CD4-positive, alpha-beta memory T cell (primary cell): ENCODE measurements at regions of chrX and their contacts with region 1.

Region 1: GRCh38 chrX:70433848-70434351 is 10.7 kb upstream of the DLG3 start:
- DNase-seq: peak; percentile 73 to 76 (median 76)
- H3K4me3 ChIP-seq: peak overlapping the region; percentile 69 to 82
- H3K4me3 Mint-ChIP-seq: peak overlapping the region; percentile 89 to 95 (median 92)
- H3K27ac ChIP-seq: peak overlapping the region; percentile 40
- H3K27ac Mint-ChIP-seq: peak overlapping the region; percentile 86 to 95 (median 94)
- H3K4me1 ChIP-seq: peaks cover 9% of the 10 kb centered on the region
- H3K4me1 Mint-ChIP-seq: peaks cover 2 to 27% (median 11%) of the 10 kb centered on the region in 4 donors
- H3K27me3 ChIP-seq: no peaks in the 10 kb centered on the region
- H3K27me3 Mint-ChIP-seq: peaks cover 0 to 2% of the 10 kb centered on the region in 2 donors

Region 2: DNA sequence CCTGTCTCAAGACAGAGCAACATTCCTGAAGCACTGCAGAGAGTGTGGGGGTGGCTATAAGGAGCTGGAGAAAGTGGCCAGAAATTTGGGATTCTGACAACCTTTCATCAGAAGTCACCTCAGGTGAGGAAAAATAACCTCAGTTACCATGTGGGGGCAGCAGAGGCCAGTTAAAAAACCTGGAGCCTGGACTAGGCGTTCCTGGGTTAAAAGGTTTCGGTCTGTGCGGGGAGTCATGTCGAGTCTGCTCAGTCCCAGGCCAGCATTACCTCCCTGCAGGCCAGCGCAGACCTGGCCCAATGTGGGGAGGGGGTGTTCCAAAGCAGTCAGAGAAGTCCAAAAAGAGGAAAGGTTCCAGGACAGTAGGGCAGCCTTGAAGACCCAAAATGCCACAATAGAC is 940.7 kb before region 1 on chrX:
- CTCF ChIA-PET with region 1: no interaction called
- POLR2A ChIA-PET with region 1: no interaction called
- intact Hi-C with region 1: loop called (anchors 5 kb)
- DNase-seq: peak in 3 of 5 donors; percentile 6 to 24 (median 13)
- H3K4me3 ChIP-seq: no peak overlapping the region
- H3K4me3 Mint-ChIP-seq: no peak overlapping the region
- H3K27ac ChIP-seq: no peak overlapping the region
- H3K27ac Mint-ChIP-seq: no peak overlapping the region
- H3K4me1 ChIP-seq: no peaks in the 10 kb centered on the region
- H3K4me1 Mint-ChIP-seq: peaks cover 0 to 1% (median 0%) of the 10 kb centered on the region in 4 donors
- H3K27me3 ChIP-seq: no peaks in the 10 kb centered on the region
- H3K27me3 Mint-ChIP-seq: peaks cover 5 to 7% of the 10 kb centered on the region in 2 donors

Region 3: DNA sequence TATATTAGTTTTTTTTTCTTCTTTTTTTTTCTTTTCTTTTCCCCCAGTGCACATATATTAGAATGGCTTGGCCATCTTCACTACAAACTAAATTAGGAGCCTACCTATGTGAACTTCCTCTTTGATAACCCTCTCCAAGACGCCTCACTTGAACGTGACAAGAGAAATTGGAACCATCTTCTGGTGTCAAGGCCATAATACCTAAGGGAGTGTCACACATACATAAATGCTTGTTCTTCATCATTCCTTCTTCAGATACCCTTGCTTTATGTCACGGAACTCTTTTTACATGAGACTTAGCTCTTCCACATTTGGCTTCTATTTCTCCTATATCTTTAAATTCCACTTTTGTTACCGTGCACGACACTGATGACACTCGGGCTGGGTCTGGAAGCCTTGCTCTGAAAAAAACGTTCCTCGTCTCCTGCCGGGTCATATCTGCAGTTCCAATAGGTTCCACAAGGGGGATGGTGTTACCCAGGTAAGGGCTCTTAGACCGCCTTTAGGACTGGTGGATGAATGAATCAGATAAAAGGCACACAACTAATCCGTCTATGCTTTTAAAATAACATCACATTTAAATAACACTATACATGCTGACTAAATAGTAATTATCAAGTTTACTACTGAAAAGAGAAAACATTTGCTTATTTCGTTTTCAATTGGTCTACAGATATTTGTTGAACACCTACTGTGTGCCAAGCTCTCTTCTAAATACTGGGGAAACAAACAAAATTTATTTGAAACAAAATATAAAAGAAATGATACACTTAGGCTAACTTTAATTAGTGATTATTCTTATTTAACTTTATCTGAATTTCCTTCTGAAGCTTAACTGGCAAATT is 236.7 kb before region 1 on chrX:
- CTCF ChIA-PET with region 1: interaction called, 29 read pairs
- POLR2A ChIA-PET with region 1: interaction called, 3 read pairs
- intact Hi-C with region 1: loop called (anchors 1 kb)
- DNase-seq: peak; percentile 59 to 69 (median 64)
- H3K4me3 ChIP-seq: no peak overlapping the region
- H3K4me3 Mint-ChIP-seq: peak overlapping the region in 3 of 8 donors; percentile 2 to 43 (median 23)
- H3K27ac ChIP-seq: no peak overlapping the region
- H3K27ac Mint-ChIP-seq: peak overlapping the region in 1 of 7 donors; percentile 45
- H3K4me1 ChIP-seq: no peaks in the 10 kb centered on the region
- H3K4me1 Mint-ChIP-seq: peaks cover 1 to 6% (median 3%) of the 10 kb centered on the region in 4 donors
- H3K27me3 ChIP-seq: no peaks in the 10 kb centered on the region
- H3K27me3 Mint-ChIP-seq: peaks cover 1 to 5% of the 10 kb centered on the region in 2 donors

Region 4: GRCh38 chrX:70324326-70324725 is 109.6 kb before region 1 on chrX:
- CTCF ChIA-PET with region 1: interaction called, 3 read pairs
- POLR2A ChIA-PET with region 1: no interaction called
- intact Hi-C with region 1: loop called (anchors 10 kb)
- DNase-seq: no peak
- H3K4me3 ChIP-seq: no peak overlapping the region
- H3K4me3 Mint-ChIP-seq: no peak overlapping the region
- H3K27ac ChIP-seq: no peak overlapping the region
- H3K27ac Mint-ChIP-seq: no peak overlapping the region
- H3K4me1 ChIP-seq: no peaks in the 10 kb centered on the region
- H3K4me1 Mint-ChIP-seq: no peaks in the 10 kb centered on the region
- H3K27me3 ChIP-seq: no peaks in the 10 kb centered on the region
- H3K27me3 Mint-ChIP-seq: no peaks in the 10 kb centered on the region

Region 5: DNA sequence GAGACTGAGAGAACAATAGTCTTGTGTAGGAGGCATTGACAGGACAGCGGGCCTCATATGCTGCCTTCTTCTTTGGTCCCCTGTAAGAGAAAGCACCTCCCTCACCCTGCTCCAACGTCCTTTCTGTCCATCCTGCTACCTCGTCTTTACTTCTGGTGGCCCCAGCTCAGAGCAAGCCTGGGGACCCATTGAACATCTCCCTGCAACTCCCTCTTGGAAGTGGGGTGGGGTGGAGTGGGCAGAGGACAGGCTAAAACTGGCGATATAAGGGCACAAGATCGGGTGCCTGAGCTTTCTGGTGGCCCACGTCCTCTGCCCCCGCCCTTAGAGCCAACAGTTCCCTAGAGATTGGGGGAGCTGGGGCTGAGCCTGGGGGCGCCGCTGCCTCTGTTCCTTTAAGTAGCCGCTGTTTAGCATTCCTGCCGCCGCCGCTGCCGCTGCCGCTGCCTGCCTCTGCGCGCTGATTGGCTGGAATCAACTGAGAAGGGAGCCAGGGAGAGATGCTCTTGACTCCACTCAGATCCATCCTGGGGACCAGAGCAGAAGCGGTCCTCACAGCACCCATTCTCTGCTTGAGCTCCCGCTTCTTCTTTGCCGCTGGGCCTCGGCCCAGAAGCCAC is 10.5 kb after region 1 on chrX and contains the start of gene DLG3:
- CTCF ChIA-PET with region 1: interaction called, 5 read pairs
- POLR2A ChIA-PET with region 1: interaction called, 19 read pairs
- intact Hi-C with region 1: no loop called
- DNase-seq: no peak
- H3K4me3 ChIP-seq: no peak within 1 kb of the TSS
- H3K4me3 Mint-ChIP-seq: peak within 1 kb of the TSS; percentile 64 to 84 (median 76)
- H3K27ac ChIP-seq: no peak within 1 kb of the TSS
- H3K27ac Mint-ChIP-seq: peak within 1 kb of the TSS in 1 of 7 donors; percentile 63
- H3K4me1 ChIP-seq: no peaks in the 10 kb centered on the region
- H3K4me1 Mint-ChIP-seq: peaks cover 0 to 1% (median under 1%) of the 10 kb centered on the region in 4 donors
- H3K27me3 ChIP-seq: peaks cover 4% of the 10 kb centered on the region
- H3K27me3 Mint-ChIP-seq: peaks cover 15 to 21% of the 10 kb centered on the region in 2 donors
- total RNA-seq, gene DLG3: 12.4 to 14.2 TPM